Activated T-helper 2 cell treated with anti-CD3 and anti-CD28 coated beads, Interferon-gamma antibody, Interleukin-2, Interleukin-4, amounts not matched to agents 10 μg/mL and 5 μg/mL and 100 μg/mL, durations not matched to agents 14 hours and 24 hours and 36 hours (primary cell): ENCODE measurements at regions of chr10 and their contacts with region 1.

Region 1: GRCh38 chr10:101291331-101292193 is 62.3 kb upstream of the LBX1 start:
- DNase-seq: no peak
- H3K4me3 Mint-ChIP-seq: peak overlapping the region; percentile 58
- H3K27ac Mint-ChIP-seq: no peak overlapping the region
- H3K4me1 Mint-ChIP-seq: no peaks in the 10 kb centered on the region
- H3K27me3 Mint-ChIP-seq: peaks cover 66% of the 10 kb centered on the region

Region 2: DNA sequence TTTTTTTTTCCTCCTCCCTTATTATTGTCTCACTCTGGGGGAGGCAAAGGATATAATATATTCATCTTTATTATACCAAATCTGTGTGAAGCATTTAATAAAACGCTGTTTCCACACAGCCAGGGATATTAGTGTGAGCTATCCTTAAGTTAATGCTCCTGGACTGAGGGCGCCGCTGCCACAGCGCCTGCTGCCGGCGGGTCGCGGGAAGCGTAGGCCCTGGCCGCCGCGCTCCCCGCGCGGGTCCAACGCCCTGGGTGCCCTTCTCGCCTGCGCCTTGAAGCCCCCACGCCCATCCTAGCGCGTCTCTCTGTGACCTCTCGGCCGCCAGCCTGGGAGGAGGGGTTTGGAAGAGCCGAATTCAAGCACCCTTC is 52.8 kb before region 1 on chr10:
- intact Hi-C with region 1: loop called (anchors 5 kb)
- DNase-seq: no peak
- H3K4me3 Mint-ChIP-seq: no peak overlapping the region
- H3K27ac Mint-ChIP-seq: no peak overlapping the region
- H3K4me1 Mint-ChIP-seq: peaks cover 5% of the 10 kb centered on the region
- H3K27me3 Mint-ChIP-seq: peaks cover 64% of the 10 kb centered on the region